ENCODE measurements at regions of chr3 and their contacts with region 1.

Region 1: DNA sequence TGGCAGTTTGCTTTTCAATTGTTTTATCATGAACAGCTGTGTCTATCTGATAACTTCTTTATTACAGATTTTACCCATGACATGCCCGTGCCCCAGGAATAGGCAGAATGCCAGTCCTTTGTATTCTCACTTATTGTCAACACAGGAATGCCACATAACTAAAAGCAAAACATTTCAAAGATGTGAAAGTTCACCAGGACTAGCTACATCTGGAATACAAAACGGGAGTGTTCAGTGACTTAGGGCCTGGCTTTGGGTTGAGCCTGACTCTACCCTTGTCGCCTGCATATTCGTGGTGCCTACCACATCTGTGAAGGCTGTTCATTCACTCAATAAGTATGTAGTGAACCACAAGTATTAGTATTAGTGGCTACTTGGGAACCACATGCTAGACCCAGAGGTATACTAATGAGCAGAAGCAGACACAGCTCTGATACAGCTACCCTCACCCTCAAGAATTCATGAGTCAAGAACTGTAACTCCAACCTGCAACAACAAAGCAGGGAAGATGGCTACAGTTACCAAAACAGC is 2.9 kb downstream of the TNFSF10 start:
- DNase-seq: no peak
- H3K4me3 ChIP-seq: peak overlapping the region; percentile 24 to 82 (median 66)
- H3K27ac ChIP-seq: peak overlapping the region in 7 of 8 donors; percentile 37 to 94 (median 92)
- H3K4me1 ChIP-seq: peaks cover 35 to 90% (median 69%) of the 10 kb centered on the region in 6 donors
- H3K27me3 ChIP-seq: no peaks in the 10 kb centered on the region
- CTCF ChIP-seq: no peak
- POLR2A ChIP-seq: no peak

Region 2: DNA sequence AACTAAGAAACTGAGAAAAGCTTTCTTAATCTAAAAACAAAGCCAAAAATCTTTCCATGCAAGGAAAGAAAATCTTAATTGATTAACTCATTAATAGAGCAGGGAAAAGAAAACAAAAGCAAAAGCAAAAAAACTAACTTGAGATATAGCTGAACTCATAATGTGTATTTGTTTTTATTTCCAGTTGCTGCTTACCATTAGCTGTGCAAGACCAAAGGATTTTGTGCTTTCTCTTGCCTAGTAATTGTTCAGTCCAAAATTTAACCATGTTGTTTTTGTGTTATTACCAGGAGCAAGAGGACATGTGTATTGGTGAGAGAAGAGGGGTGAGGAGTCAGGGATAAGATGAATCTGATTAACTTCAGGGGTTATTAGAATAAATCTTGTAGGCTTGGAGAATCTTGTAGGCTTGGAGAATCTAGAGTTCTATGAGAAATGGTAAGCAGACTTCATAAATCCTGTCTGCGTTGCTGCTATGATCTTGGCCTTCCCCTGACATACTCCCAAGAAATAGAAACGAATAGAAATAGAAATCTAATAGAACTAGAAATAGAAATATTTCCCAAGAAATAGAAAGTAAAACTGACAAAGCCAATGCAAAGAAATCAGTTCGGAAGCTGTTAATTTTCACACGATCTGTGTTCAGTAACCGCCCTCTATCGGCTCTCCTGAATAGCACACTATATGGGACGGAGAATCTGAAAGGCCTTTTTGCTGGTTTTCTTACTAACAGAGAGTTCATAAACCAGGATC is 75.5 kb after region 1 on chr3:
- intact Hi-C with region 1: loop called (anchors 2 kb)
- DNase-seq: no peak
- H3K4me3 ChIP-seq: peak overlapping the region in 6 of 8 donors; percentile 1 to 61 (median 20)
- H3K27ac ChIP-seq: peak overlapping the region; percentile 57 to 88 (median 82)
- H3K4me1 ChIP-seq: peaks cover 13 to 58% (median 44%) of the 10 kb centered on the region in 6 donors
- H3K27me3 ChIP-seq: no peaks in the 10 kb centered on the region
- CTCF ChIP-seq: peak; percentile 74 to 92 (median 86)
- POLR2A ChIP-seq: no peak

Measured in spleen (tissue), 13 donors.